Common myeloid progenitor, CD34-positive (primary cell): ENCODE measurements at regions of chr2 and their contacts with region 1.

Region 1: GRCh38 chr2:217510771-217511291 is 492.0 kb downstream of the TNS1 start:
- DNase-seq: peak; percentile 83 to 89 (median 87)
- H3K4me3 ChIP-seq: no peak overlapping the region
- H3K27ac ChIP-seq: no peak overlapping the region
- H3K4me1 ChIP-seq: peaks cover 0 to 3% (median 0%) of the 10 kb centered on the region in 4 experiments
- H3K27me3 ChIP-seq: peaks cover 0 to 3% (median 0%) of the 10 kb centered on the region in 5 experiments

Region 2: DNA sequence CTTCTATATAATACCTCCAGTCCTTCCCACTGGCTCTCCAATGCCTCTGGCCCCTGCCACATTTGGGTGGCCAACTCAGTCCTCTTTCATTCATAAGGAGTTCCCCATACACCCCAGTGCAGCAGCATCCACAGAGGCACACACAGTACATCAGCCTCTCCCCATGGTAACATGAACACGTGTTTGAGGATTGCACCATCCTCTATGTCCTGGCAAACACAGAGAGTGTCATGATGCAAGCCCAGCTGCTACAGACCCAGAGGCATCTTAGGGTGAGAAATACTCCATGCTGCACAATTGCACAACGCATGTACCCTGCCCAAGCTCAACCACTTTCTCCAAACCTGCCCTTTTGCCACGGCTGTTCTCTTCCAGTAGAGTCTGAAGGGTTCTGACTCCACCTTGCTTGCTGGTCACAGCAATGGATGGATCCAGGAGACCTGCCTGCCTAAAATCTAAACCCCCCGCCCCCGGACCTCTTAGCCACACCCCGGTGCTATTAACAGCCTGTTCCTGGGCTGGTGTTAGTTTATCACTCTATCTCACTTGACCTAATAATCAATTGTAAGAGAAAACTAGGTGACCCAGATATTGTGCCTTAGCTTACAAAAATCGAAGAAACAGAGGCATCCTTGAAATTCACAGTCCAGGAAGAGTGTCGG is 826.9 kb before region 1 on chr2:
- CTCF ChIA-PET with region 1: interaction called, 31 read pairs
- POLR2A ChIA-PET with region 1: no interaction called
- DNase-seq: peak in 2 of 3 donors; percentile 43 to 48
- H3K4me3 ChIP-seq: no peak overlapping the region
- H3K27ac ChIP-seq: no peak overlapping the region
- H3K4me1 ChIP-seq: no peaks in the 10 kb centered on the region
- H3K27me3 ChIP-seq: peaks cover 0 to 42% (median 10%) of the 10 kb centered on the region in 5 experiments

Region 3: DNA sequence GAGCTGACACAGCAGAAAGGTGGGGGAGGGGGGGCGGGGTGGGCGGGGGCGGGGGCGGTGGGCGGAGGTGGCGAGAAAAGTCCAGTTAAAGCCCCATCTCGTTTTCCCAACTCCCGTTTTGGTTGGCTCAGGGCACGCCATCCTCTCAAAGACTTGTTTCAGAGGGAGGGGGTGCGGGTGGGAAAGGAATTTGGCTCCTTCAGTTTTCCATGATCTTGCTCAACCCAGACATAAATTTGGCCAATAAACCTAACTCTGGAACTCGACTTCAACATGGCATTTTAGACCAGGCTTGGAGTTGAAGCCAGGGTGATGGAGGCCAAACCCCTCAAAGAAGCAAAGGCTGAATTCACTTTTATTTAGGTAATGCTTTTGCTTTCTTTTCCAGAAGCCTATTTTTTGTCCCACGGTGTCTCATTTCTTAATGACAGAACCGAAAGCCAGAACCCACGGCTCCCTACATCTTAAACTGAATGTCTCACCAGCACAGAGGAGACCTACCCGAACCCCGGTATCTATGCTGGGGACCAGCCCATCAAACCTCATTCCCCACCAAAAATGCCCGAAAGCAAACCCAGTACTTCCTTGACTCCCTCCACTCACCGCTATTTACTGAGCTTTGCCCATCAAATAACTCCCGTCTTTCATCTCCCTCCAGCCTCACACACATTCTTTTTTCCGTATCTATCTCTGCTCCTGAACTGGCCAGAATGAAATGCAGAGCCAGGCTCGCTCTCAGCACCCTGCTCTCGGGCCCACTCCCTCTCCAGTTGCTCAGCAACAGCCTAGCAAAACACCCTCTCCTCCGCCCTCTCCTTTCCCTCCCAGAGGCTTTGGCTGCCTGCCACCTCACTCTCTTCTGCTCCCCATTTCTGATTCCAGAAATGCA is 819.7 kb before region 1 on chr2:
- CTCF ChIA-PET with region 1: interaction called, 72 read pairs
- POLR2A ChIA-PET with region 1: no interaction called
- DNase-seq: peak; percentile 75 to 87 (median 85)
- H3K4me3 ChIP-seq: peak overlapping the region in 3 of 7 experiments; percentile 36 to 57 (median 44)
- H3K27ac ChIP-seq: no peak overlapping the region
- H3K4me1 ChIP-seq: peaks cover 0 to 48% (median 27%) of the 10 kb centered on the region in 4 experiments
- H3K27me3 ChIP-seq: peaks cover 0 to 86% (median 42%) of the 10 kb centered on the region in 5 experiments

Region 4: DNA sequence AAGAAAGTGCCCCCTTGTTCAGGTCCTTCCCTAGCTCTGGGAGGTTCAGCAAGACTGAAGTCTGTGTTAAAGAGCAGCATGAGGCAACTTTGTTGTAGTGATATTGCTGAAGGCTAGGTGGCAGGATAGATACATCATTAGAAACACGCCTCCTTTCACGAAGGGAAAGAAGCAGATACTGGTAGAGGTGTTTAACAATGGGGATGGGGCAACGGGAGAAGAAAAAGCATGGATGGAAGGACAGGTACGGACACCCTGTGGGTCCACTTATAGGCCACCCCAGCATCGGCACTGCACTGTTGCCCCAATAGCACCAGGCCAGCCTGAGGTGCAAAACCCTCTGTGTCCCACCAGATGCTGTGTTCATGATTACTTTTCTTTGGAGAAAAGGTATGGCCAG is 811.9 kb before region 1 on chr2:
- CTCF ChIA-PET with region 1: interaction called, 72 read pairs
- POLR2A ChIA-PET with region 1: no interaction called
- DNase-seq: peak; percentile 59 to 75 (median 75)
- H3K4me3 ChIP-seq: no peak overlapping the region
- H3K27ac ChIP-seq: no peak overlapping the region
- H3K4me1 ChIP-seq: peaks cover 0 to 18% (median 9%) of the 10 kb centered on the region in 4 experiments
- H3K27me3 ChIP-seq: peaks cover 0 to 53% (median 39%) of the 10 kb centered on the region in 5 experiments

Region 5: GRCh38 chr2:217402761-217403383 is 108.0 kb before region 1 on chr2:
- CTCF ChIA-PET with region 1: no interaction called
- POLR2A ChIA-PET with region 1: no interaction called
- DNase-seq: peak in 2 of 3 donors; percentile 10 to 22
- H3K4me3 ChIP-seq: no peak overlapping the region
- H3K27ac ChIP-seq: no peak overlapping the region
- H3K4me1 ChIP-seq: peaks cover 0 to 3% (median 0%) of the 10 kb centered on the region in 4 experiments
- H3K27me3 ChIP-seq: peaks cover 0 to 5% (median 0%) of the 10 kb centered on the region in 5 experiments

Region 6: DNA sequence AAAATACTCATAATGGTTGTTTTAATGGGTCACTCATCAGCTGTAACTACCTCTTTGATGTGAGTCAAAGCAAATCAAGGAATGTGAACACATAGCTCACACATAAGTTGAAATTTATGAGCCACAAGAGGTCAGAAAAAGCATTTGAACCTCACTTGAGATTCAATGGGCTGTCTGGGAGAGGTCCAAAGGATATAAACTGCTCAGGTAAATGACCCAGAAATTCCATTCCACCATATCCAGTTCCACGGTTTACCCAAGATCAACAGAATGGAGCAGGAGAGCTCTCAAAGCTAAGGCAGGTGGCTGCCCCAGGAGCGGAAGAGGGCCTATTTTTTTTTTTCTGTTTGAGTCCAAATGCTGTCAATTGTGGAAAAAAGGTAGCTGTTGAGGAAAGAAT is 27.9 kb after region 1 on chr2:
- CTCF ChIA-PET with region 1: no interaction called
- POLR2A ChIA-PET with region 1: no interaction called
- DNase-seq: no peak
- H3K4me3 ChIP-seq: no peak overlapping the region
- H3K27ac ChIP-seq: no peak overlapping the region
- H3K4me1 ChIP-seq: no peaks in the 10 kb centered on the region
- H3K27me3 ChIP-seq: peaks cover 0 to 5% (median 0%) of the 10 kb centered on the region in 5 experiments